Activated CD4-positive, alpha-beta memory T cell treated with anti-CD3 and anti-CD28 coated beads for 36 hours (primary cell): ENCODE measurements at regions of chr5 and their contacts with region 1.

Region 1: GRCh38 chr5:126686451-126687126 is 85.8 kb downstream of the PHAX start:
- DNase-seq: no peak
- H3K4me3 Mint-ChIP-seq: no peak overlapping the region
- H3K27ac Mint-ChIP-seq: no peak overlapping the region
- H3K4me1 Mint-ChIP-seq: peaks cover 11% of the 10 kb centered on the region
- H3K27me3 Mint-ChIP-seq: peaks cover 3% of the 10 kb centered on the region

Region 2: GRCh38 chr5:125584140-125584520 is 1102.5 kb before region 1 on chr5:
- CTCF ChIA-PET with region 1: no interaction called
- POLR2A ChIA-PET with region 1: no interaction called
- intact Hi-C with region 1: no loop called
- DNase-seq: no peak
- H3K4me3 Mint-ChIP-seq: no peak overlapping the region
- H3K27ac Mint-ChIP-seq: no peak overlapping the region
- H3K4me1 Mint-ChIP-seq: no peaks in the 10 kb centered on the region
- H3K27me3 Mint-ChIP-seq: no peaks in the 10 kb centered on the region

Region 3: DNA sequence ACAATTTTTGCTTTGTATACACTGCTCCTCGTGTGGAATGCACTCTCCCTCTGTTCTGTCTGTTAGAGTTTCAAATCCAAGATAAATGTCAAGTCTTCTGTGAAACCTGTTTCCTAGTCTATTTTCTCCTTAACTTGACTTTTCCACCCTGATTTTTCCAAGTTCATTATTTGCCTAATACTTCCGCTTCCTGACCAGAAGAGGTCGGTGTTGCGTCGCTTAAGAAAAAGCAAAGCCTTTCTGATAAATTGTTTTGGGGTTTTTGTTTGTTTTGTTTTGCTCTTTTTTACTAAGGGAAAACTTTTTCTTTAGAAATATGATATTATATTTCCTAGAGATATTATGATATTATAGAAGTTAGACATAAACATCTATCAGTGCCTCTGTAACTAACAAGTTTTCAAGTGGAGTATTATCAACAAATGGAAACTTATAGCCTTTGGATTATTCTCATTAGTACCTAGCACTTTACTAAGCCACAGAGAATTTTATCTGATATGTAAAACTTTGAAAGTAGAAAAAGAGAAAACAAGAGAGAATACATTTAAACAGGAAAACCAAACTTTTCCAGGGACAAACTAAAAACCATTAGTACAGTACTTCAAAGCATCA is 30.1 kb before region 1 on chr5:
- CTCF ChIA-PET with region 1: no interaction called
- POLR2A ChIA-PET with region 1: no interaction called
- intact Hi-C with region 1: no loop called
- DNase-seq: peak; percentile 30
- H3K4me3 Mint-ChIP-seq: no peak overlapping the region
- H3K27ac Mint-ChIP-seq: no peak overlapping the region
- H3K4me1 Mint-ChIP-seq: peaks cover 6% of the 10 kb centered on the region
- H3K27me3 Mint-ChIP-seq: no peaks in the 10 kb centered on the region

Region 4: DNA sequence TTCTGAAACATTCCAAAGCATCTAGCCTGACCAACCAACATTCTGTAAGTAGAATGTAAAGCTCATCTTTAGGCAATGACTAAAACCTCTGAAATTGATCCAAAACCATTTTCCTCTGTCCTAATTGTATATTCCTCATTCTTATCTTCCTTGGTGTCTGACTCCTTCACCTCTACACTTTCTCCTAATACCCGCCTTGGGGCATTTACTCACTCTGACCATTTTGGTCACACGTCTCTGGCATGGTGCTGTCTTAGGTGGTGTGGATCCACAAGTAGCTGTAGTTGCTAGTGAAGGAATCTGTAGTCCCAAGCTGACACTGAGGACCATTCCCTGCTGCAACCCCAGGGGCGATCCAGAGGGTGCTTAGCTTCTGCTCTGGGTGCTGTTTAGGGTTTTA is 49.6 kb after region 1 on chr5:
- CTCF ChIA-PET with region 1: no interaction called
- POLR2A ChIA-PET with region 1: no interaction called
- intact Hi-C with region 1: loop called (anchors 5 kb)
- DNase-seq: no peak
- H3K4me3 Mint-ChIP-seq: no peak overlapping the region
- H3K27ac Mint-ChIP-seq: no peak overlapping the region
- H3K4me1 Mint-ChIP-seq: peaks cover 4% of the 10 kb centered on the region
- H3K27me3 Mint-ChIP-seq: no peaks in the 10 kb centered on the region

Region 5: GRCh38 chr5:126745259-126745992 is 58.8 kb after region 1 on chr5:
- CTCF ChIA-PET with region 1: no interaction called
- POLR2A ChIA-PET with region 1: no interaction called
- intact Hi-C with region 1: loop called (anchors 2 kb)
- DNase-seq: no peak
- H3K4me3 Mint-ChIP-seq: no peak overlapping the region
- H3K27ac Mint-ChIP-seq: no peak overlapping the region
- H3K4me1 Mint-ChIP-seq: peaks cover 30% of the 10 kb centered on the region
- H3K27me3 Mint-ChIP-seq: peaks cover 1% of the 10 kb centered on the region